ENCODE measurements at regions of chr7 and their contacts with region 1.

Region 1: GRCh38 chr7:19969859-19970498 is 196.6 kb upstream of the TMEM196 start:
- DNase-seq: peak; percentile 70
- H3K4me3 ChIP-seq: no peak overlapping the region
- H3K27ac ChIP-seq: peak overlapping the region; percentile 30
- H3K4me1 ChIP-seq: peaks cover 15% of the 10 kb centered on the region
- H3K27me3 ChIP-seq: no peaks in the 10 kb centered on the region
- CTCF ChIP-seq: no peak
- POLR2A ChIP-seq: no peak

Region 2: GRCh38 chr7:19692111-19692828 is 277.7 kb before region 1 on chr7:
- CTCF ChIA-PET with region 1: no interaction called
- POLR2A ChIA-PET with region 1: no interaction called
- dilution Hi-C with region 1: no loop called
- intact Hi-C with region 1: no loop called
- DNase-seq: no peak
- H3K4me3 ChIP-seq: no peak overlapping the region
- H3K27ac ChIP-seq: no peak overlapping the region
- H3K4me1 ChIP-seq: no peaks in the 10 kb centered on the region
- H3K27me3 ChIP-seq: no peaks in the 10 kb centered on the region
- CTCF ChIP-seq: no peak
- POLR2A ChIP-seq: no peak

Region 3: GRCh38 chr7:19919261-19920095 is 50.5 kb before region 1 on chr7:
- CTCF ChIA-PET with region 1: no interaction called
- POLR2A ChIA-PET with region 1: interaction called, 3 read pairs
- dilution Hi-C with region 1: no loop called
- intact Hi-C with region 1: loop called (anchors 5 kb)
- DNase-seq: peak; percentile 80
- H3K4me3 ChIP-seq: no peak overlapping the region
- H3K27ac ChIP-seq: peak overlapping the region; percentile 66
- H3K4me1 ChIP-seq: peaks cover 42% of the 10 kb centered on the region
- H3K27me3 ChIP-seq: no peaks in the 10 kb centered on the region
- CTCF ChIP-seq: no peak
- POLR2A ChIP-seq: no peak